ENCODE measurements at regions of chr2 and their contacts with region 1.

Region 1: DNA sequence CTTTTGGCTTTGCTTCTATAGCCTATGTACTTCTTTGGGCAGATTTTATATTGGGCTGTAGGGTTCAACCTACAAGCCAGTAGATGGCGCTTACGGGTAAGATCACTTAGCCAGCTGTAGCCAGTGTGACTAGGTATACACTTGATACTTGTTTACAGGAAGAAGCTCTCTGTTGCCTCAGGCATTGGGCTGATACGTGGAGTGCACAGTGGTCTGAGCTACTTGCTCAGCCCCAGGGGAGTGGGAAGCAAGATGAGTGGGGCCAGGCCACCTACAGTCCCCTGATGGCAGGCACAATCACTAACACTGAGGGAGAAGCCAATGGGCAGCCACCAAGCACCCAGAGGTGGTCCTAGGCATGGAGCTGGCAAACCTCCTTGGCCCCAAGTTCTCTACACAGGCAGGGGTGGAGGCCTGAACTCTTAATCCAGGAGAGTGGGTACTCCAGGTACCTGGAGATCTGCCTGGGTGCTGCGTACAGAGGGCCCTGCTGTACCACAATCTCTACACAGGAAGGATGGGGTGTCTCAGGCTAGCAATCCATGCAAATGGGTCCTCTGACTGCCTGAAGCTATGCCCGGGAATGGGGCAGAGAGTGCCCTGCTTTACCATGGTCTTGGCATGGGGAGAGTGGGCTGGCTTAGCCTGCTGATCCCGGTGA is 122.2 kb downstream of the NCOA1 start:
- DNase-seq: peak; percentile 32
- ATAC-seq: peak; percentile 96
- H3K4me3 ChIP-seq: no peak overlapping the region
- H3K27ac ChIP-seq: peak overlapping the region; percentile 17
- H3K4me1 ChIP-seq: peaks cover 15% of the 10 kb centered on the region
- H3K27me3 ChIP-seq: no peaks in the 10 kb centered on the region
- CTCF ChIP-seq: peak; percentile 52 to 69 (median 59)
- EP300 ChIP-seq: no peak
- POLR2A ChIP-seq: no peak
- RAD21 ChIP-seq: peak; percentile 64

Region 2: DNA sequence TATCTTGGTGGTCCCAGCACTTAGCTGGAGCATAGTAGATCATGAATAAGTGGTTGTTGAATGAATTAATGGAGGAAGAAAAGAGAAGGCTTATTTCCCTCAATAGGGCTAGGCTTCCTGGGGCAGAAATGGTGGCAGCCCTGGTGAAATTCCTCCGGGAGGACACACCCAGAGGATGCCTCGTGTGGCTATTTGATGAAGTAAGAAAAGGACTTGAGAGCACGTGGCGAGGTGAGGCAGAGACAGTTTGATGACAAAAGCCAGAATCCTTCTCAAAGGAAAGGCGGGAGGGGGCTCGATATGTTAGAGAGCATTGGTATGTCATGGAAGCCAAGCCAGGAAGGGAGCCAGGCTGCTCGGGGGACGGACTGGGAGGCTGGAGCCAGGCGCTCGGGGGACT is 423.7 kb before region 1 on chr2:
- CTCF ChIA-PET with region 1: no interaction called
- POLR2A ChIA-PET with region 1: no interaction called
- RAD21 ChIA-PET with region 1: no interaction called
- SMC1A ChIA-PET with region 1: no interaction called
- in situ Hi-C with region 1: no loop called
- intact Hi-C with region 1: no loop called
- DNase-seq: no peak
- ATAC-seq: no peak
- H3K4me3 ChIP-seq: no peak overlapping the region
- H3K27ac ChIP-seq: no peak overlapping the region
- H3K4me1 ChIP-seq: no peaks in the 10 kb centered on the region; the same call in 1 of the 2 replicates
- H3K27me3 ChIP-seq: no peaks in the 10 kb centered on the region
- CTCF ChIP-seq: no peak
- EP300 ChIP-seq: no peak
- POLR2A ChIP-seq: no peak
- RAD21 ChIP-seq: no peak

Region 3: DNA sequence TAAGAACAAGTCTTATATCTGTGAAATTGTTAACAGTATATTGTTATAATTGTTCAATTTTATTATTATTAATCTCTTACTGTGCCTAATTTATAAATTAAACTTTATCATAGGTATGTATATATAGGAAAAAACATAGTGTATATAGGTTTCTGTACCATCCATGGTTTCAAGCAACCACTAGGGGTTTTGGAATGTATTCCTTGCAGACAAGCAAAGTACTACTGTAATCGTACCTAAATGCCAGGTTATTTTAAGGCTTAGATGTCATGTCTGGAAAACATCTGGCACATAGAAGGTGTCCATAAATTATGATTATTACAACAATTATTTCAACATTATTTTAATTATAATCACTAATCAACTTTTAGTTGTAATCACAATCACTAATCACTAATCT is 261.3 kb before region 1 on chr2:
- CTCF ChIA-PET with region 1: no interaction called
- POLR2A ChIA-PET with region 1: no interaction called
- RAD21 ChIA-PET with region 1: no interaction called
- SMC1A ChIA-PET with region 1: no interaction called
- in situ Hi-C with region 1: no loop called
- intact Hi-C with region 1: no loop called
- DNase-seq: no peak
- ATAC-seq: 0 out of 3 replicates have a peak, but pooled peaks have one; percentile 10
- H3K4me3 ChIP-seq: no peak overlapping the region
- H3K27ac ChIP-seq: no peak overlapping the region; the same call in 1 of the 2 replicates
- H3K4me1 ChIP-seq: peaks cover 29% of the 10 kb centered on the region
- H3K27me3 ChIP-seq: no peaks in the 10 kb centered on the region
- CTCF ChIP-seq: peak in 2 of 3 experiments; percentile 12 to 19; a peak in 2 of 6 replicates
- EP300 ChIP-seq: no peak
- POLR2A ChIP-seq: no peak
- RAD21 ChIP-seq: no peak

Region 4: GRCh38 chr2:24632172-24632571 is 18.9 kb after region 1 on chr2:
- CTCF ChIA-PET with region 1: interaction called, 10 read pairs
- POLR2A ChIA-PET with region 1: interaction called, 3 read pairs
- RAD21 ChIA-PET with region 1: interaction called, 4 read pairs
- SMC1A ChIA-PET with region 1: interaction called, 6 read pairs
- in situ Hi-C with region 1: no loop called
- intact Hi-C with region 1: no loop called
- DNase-seq: no peak
- ATAC-seq: no peak
- H3K4me3 ChIP-seq: no peak overlapping the region
- H3K27ac ChIP-seq: no peak overlapping the region
- H3K4me1 ChIP-seq: no peaks in the 10 kb centered on the region
- H3K27me3 ChIP-seq: no peaks in the 10 kb centered on the region
- CTCF ChIP-seq: no peak
- EP300 ChIP-seq: no peak
- POLR2A ChIP-seq: no peak
- RAD21 ChIP-seq: no peak

Region 5: DNA sequence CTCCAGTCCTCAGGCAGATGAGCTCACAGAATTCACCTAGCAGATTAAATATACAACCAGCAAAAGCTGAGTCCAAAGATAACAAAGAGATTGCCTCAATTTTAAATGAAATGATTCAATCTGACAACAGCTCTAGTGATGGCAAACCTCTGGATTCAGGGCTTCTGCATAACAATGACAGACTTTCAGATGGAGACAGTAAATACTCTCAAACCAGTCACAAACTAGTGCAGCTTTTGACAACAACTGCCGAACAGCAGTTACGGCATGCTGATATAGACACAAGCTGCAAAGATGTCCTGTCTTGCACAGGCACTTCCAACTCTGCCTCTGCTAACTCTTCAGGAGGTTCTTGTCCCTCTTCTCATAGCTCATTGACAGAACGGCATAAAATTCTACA is 93.9 kb after region 1 on chr2:
- CTCF ChIA-PET with region 1: no interaction called
- POLR2A ChIA-PET with region 1: no interaction called
- RAD21 ChIA-PET with region 1: no interaction called
- SMC1A ChIA-PET with region 1: no interaction called
- in situ Hi-C with region 1: no loop called
- intact Hi-C with region 1: no loop called
- DNase-seq: no peak
- ATAC-seq: no peak
- H3K4me3 ChIP-seq: no peak overlapping the region
- H3K27ac ChIP-seq: no peak overlapping the region
- H3K4me1 ChIP-seq: no peaks in the 10 kb centered on the region
- H3K27me3 ChIP-seq: no peaks in the 10 kb centered on the region
- CTCF ChIP-seq: no peak
- EP300 ChIP-seq: no peak
- POLR2A ChIP-seq: no peak
- RAD21 ChIP-seq: no peak

Region 6: DNA sequence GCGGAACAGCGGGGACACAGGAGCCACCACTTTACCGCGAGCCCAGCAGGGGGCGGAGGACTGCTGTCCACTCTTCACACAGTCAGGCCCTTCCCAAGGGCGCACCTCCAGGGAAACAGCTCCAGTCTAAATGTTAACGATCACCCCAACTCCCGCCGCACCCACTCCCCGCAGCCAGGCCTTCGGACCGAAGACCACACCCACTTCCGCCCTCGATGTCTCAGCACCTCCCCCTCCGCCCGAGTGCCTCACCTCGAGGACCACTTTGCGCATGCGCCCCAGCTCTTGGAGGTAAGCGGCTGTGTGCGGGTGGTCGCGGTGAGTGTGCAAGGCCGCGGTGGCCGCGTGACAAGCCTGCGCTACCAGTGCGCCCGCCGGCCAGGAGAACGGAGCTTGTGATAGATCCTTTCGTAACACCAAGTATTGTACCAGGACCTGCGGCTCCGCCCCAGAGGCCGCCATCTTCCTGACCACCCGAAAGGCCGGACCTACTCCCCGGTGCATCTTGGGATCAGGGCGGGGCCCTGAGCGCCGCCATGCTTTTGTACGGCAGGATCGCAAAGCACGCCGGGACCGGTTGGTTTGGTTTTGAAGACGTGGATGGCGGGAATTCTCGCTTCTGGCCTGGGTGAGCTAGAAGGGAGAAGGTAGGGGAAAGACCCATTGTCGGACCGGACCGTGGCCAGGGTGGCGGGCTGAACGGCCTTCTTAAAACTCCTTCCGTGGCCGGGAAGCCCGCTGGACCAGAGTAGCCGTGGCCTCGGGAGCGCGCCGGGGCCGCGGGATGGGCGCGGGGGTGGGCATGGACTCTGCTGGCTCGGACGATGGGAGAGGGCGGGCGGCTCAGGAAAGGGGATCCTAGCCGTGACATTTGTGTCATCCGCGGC is 179.8 kb after region 1 on chr2 and contains the starts of genes CENPO and PTRHD1:
- CTCF ChIA-PET with region 1: interaction called, 4 read pairs
- POLR2A ChIA-PET with region 1: no interaction called
- RAD21 ChIA-PET with region 1: interaction called, 24 read pairs
- SMC1A ChIA-PET with region 1: interaction called, 3 read pairs
- in situ Hi-C with region 1: no loop called
- intact Hi-C with region 1: no loop called
- DNase-seq: peak; percentile 92
- ATAC-seq: peak; percentile 97
- H3K4me3 ChIP-seq: peak within 1 kb of the TSS; percentile 97
- H3K27ac ChIP-seq: peak within 1 kb of the TSS; percentile 98
- H3K4me1 ChIP-seq: peaks cover 6% of the 10 kb centered on the region
- H3K27me3 ChIP-seq: no peaks in the 10 kb centered on the region
- CTCF ChIP-seq: peak; percentile 36 to 40 (median 37); a peak in 5 of 6 replicates
- EP300 ChIP-seq: no peak
- POLR2A ChIP-seq: peak; percentile 93
- RAD21 ChIP-seq: no peak
- polyA plus RNA-seq, gene CENPO: 18.7 to 23.1 TPM
- polyA plus RNA-seq, gene PTRHD1: 30.6 to 43.9 TPM

Region 7: GRCh38 chr2:24827321-24828237 is 214.3 kb after region 1 on chr2:
- CTCF ChIA-PET with region 1: interaction called, 59 read pairs
- POLR2A ChIA-PET with region 1: interaction called, 9 read pairs
- RAD21 ChIA-PET with region 1: interaction called, 18 read pairs
- SMC1A ChIA-PET with region 1: interaction called, 19 read pairs
- in situ Hi-C with region 1: no loop called
- intact Hi-C with region 1: loop called (anchors 2 kb)
- DNase-seq: peak; percentile 24
- ATAC-seq: peak; percentile 96
- H3K4me3 ChIP-seq: no peak overlapping the region
- H3K27ac ChIP-seq: no peak overlapping the region
- H3K4me1 ChIP-seq: no peaks in the 10 kb centered on the region; the same call in 1 of the 2 replicates
- H3K27me3 ChIP-seq: no peaks in the 10 kb centered on the region
- CTCF ChIP-seq: peak; percentile 92 to 97 (median 92)
- EP300 ChIP-seq: no peak
- POLR2A ChIP-seq: peak; percentile 40; the same call in 1 of the 2 replicates
- RAD21 ChIP-seq: peak; percentile 95